PC-9 (cell line): ENCODE measurements at regions of chr1 and their contacts with region 1.

Region 1: GRCh38 chr1:66511118-66511517 is 22.8 kb upstream of the SGIP1 start:
- DNase-seq: no peak
- H3K4me3 ChIP-seq: no peak overlapping the region
- H3K27ac ChIP-seq: no peak overlapping the region
- H3K4me1 ChIP-seq: no peaks in the 10 kb centered on the region
- H3K27me3 ChIP-seq: no peaks in the 10 kb centered on the region
- CTCF ChIP-seq: no peak

Region 2: GRCh38 chr1:65148548-65149350 is 1362.4 kb before region 1 on chr1:
- CTCF ChIA-PET with region 1: interaction called, 23 read pairs
- POLR2A ChIA-PET with region 1: no interaction called
- intact Hi-C with region 1: no loop called
- DNase-seq: peak in 1 of 2 experiments; percentile 28
- H3K4me3 ChIP-seq: peak overlapping the region; percentile 97
- H3K27ac ChIP-seq: no peak overlapping the region
- H3K4me1 ChIP-seq: peaks cover 9% of the 10 kb centered on the region
- H3K27me3 ChIP-seq: no peaks in the 10 kb centered on the region
- CTCF ChIP-seq: no peak

Region 3: DNA sequence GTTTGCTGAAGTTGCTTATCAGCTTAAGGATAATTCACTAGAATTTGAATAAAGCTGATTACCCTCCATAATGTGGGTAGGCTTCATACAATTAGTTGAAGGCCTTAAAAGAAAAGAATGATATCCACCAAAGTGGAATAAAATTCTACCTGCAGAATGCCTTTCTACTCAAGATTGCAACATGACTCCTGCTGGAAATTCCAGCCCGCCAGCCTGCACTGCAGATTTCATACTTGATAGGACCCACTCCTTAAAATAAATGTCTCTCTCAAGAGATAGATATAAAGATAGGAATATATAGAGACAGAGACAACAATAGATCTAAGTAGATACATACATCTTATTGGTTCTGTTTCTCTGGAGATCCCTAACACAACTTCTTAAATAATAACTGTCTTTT is 313.7 kb after region 1 on chr1:
- CTCF ChIA-PET with region 1: no interaction called
- POLR2A ChIA-PET with region 1: no interaction called
- intact Hi-C with region 1: no loop called
- DNase-seq: no peak
- H3K4me3 ChIP-seq: no peak overlapping the region
- H3K27ac ChIP-seq: no peak overlapping the region
- H3K4me1 ChIP-seq: no peaks in the 10 kb centered on the region
- H3K27me3 ChIP-seq: no peaks in the 10 kb centered on the region
- CTCF ChIP-seq: no peak